Activated B cell treated with CpG ODN at 0.5 μM for 24 hours (primary cell): ENCODE measurements at regions of chr5 and their contacts with region 1.

Region 1: GRCh38 chr5:79133657-79134451 is 22.2 kb downstream of the BHMT start:
- DNase-seq: no peak
- ATAC-seq: peak; percentile 62
- H3K4me3 Mint-ChIP-seq: no peak overlapping the region
- H3K27ac Mint-ChIP-seq: no peak overlapping the region
- H3K4me1 Mint-ChIP-seq: peaks cover 8% of the 10 kb centered on the region
- H3K27me3 Mint-ChIP-seq: peaks cover 5% of the 10 kb centered on the region
- CTCF ChIP-seq: no peak

Region 2: DNA sequence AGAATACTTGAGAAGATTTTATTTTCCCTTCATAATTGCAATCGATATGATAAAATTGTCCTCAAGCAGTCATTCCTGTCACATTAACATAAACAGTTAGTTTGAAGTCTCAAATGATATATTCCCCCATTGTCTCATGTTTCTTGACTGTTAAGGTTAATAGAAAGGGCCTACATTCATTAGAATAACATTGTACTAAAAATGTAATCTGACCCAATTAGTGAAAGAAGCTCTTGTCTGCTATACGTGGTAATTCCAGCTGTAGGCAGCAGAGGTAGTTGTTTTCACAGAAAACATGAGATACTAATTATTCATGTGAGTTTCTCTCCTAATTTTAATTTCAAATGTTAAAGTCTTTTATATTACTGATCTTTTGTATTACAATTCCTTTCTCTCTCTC is 813.5 kb before region 1 on chr5:
- CTCF ChIA-PET with region 1: no interaction called
- POLR2A ChIA-PET with region 1: interaction called, 6 read pairs
- intact Hi-C with region 1: loop called (anchors 5 kb)
- DNase-seq: no peak
- ATAC-seq: no peak
- H3K4me3 Mint-ChIP-seq: no peak overlapping the region
- H3K27ac Mint-ChIP-seq: no peak overlapping the region
- H3K4me1 Mint-ChIP-seq: no peaks in the 10 kb centered on the region
- H3K27me3 Mint-ChIP-seq: no peaks in the 10 kb centered on the region
- CTCF ChIP-seq: no peak

Region 3: GRCh38 chr5:78537821-78538220 is 596.0 kb before region 1 on chr5:
- CTCF ChIA-PET with region 1: interaction called, 13 read pairs
- POLR2A ChIA-PET with region 1: no interaction called
- intact Hi-C with region 1: loop called (anchors 2 kb)
- DNase-seq: no peak
- ATAC-seq: peak; percentile 80
- H3K4me3 Mint-ChIP-seq: no peak overlapping the region
- H3K27ac Mint-ChIP-seq: no peak overlapping the region
- H3K4me1 Mint-ChIP-seq: peaks cover 10% of the 10 kb centered on the region
- H3K27me3 Mint-ChIP-seq: no peaks in the 10 kb centered on the region
- CTCF ChIP-seq: no peak

Region 4: GRCh38 chr5:78964887-78965286 is 169.0 kb before region 1 on chr5:
- CTCF ChIA-PET with region 1: interaction called, 7 read pairs
- POLR2A ChIA-PET with region 1: no interaction called
- intact Hi-C with region 1: loop called (anchors 1 kb)
- DNase-seq: no peak
- ATAC-seq: peak; percentile 62
- H3K4me3 Mint-ChIP-seq: no peak overlapping the region
- H3K27ac Mint-ChIP-seq: no peak overlapping the region
- H3K4me1 Mint-ChIP-seq: peaks cover 3% of the 10 kb centered on the region
- H3K27me3 Mint-ChIP-seq: no peaks in the 10 kb centered on the region
- CTCF ChIP-seq: no peak

Region 5: DNA sequence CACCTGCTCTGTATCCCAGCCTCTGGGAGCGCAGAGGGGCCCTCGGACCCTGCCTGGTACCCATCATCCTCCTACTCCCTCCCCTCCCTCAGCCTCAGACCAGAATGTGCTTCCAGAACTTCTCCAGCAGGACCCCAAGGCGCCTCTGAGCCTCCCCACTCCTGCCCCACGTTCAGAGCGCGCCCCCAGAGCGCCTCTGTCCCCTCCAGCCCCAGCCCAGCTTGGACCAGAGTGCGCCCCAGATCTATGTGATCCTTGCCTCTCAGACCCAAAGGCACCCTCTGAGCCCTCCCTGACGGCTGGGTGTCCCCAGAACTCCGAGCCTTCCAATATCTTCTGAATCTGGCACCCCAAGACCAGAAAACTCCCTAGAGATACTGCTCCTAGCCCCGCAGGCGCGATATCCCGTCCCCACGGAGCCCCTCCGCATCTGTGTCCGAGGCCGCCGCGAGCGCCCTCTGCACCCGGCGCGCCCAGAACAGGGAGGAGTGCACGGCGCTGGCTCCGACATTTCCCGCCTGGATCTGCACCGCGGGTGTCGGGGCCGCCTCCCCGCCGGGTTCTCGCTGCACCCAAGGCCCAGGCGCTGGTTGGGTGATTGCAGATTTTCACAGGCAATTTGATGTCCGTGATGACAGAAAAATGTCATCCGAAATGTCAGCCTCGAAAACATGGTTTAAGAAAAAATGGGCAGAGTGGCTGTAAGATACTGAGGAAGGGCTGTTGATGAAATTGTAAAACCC is 21.7 kb before region 1 on chr5:
- CTCF ChIA-PET with region 1: no interaction called
- POLR2A ChIA-PET with region 1: no interaction called
- intact Hi-C with region 1: no loop called
- DNase-seq: no peak
- ATAC-seq: no peak
- H3K4me3 Mint-ChIP-seq: no peak overlapping the region
- H3K27ac Mint-ChIP-seq: no peak overlapping the region
- H3K4me1 Mint-ChIP-seq: no peaks in the 10 kb centered on the region
- H3K27me3 Mint-ChIP-seq: peaks cover 50% of the 10 kb centered on the region
- CTCF ChIP-seq: no peak

Region 6: DNA sequence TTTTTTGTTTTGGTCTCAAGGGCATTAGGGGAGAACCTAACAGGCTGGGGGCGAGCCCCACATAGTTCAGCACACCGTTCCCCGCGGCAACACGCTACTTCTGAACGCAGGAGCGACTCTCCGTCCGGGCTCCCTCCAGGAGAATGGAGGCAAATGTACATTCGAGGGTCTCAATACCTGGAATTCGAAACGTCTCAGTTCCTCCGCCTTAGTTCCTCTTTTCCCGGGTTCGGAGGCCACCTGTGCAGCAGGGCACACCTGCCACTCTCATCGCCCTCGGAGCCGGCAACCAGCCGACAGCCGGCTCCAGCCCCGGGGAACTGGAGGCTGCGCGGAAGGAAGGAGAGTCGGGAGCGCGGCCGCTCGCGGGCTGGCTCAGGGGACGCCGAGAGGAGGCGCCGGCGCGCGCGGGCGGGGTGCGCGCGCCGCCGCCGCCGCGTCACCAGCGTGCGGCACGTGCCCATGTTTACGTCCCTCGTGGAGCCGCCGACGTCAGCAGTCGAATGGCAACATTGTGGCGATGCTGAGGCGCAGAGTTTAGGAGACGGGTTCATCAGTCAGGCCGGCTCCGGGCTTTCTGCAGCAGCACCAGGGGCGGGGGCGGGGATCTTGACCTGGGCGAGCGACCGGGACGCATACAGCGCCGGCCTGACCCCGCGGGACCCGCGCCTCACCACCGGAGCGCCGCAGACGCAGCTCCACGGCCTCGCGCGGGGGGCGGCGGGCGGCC is 101.9 kb after region 1 on chr5 and contains the start of gene JMY:
- CTCF ChIA-PET with region 1: no interaction called
- POLR2A ChIA-PET with region 1: no interaction called
- intact Hi-C with region 1: loop called (anchors 10 kb)
- DNase-seq: peak; percentile 68
- ATAC-seq: peak; percentile 79
- H3K4me3 Mint-ChIP-seq: peak within 1 kb of the TSS; percentile 91
- H3K27ac Mint-ChIP-seq: peak within 1 kb of the TSS; percentile 94
- H3K4me1 Mint-ChIP-seq: peaks cover 34% of the 10 kb centered on the region
- H3K27me3 Mint-ChIP-seq: no peaks in the 10 kb centered on the region
- CTCF ChIP-seq: no peak
- total RNA-seq, gene JMY: 6.4 and 6.9 TPM in 2 replicates

Region 7: DNA sequence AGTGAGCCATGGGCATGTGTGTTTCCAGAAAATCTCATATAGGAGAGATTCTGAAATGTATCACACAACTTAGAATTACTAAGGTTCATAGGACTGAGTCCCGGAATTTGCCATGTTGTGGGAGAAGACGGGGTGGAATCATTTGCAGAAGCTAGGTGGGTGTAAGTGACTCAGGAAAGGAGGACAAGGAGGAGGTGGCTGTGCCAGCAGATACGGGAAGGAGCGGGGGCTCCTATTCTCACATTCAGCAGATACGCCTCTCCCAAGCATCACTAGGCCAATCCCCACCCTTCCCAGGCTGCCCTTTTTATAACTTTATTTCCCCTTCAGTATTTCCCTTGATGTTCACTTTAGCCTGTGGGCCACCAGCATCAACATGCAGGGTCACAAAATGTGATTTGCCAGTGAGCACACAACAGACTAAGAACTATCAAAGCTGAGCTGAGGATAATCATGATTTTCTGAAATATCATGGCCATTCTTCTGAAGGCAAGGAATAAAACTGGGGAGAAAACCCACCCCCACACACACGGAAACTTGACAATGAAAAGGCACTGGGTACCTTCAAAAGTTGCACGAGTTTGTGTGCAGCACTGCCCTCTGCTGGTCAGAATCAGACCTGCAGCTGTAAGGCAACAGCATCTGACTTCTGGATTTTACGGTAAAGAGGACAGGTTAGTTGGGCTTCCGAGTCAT is 724.0 kb after region 1 on chr5:
- CTCF ChIA-PET with region 1: interaction called, 4 read pairs
- POLR2A ChIA-PET with region 1: no interaction called
- intact Hi-C with region 1: loop called (anchors 2 kb)
- DNase-seq: peak; percentile 53
- ATAC-seq: peak; percentile 47
- H3K4me3 Mint-ChIP-seq: no peak overlapping the region
- H3K27ac Mint-ChIP-seq: no peak overlapping the region
- H3K4me1 Mint-ChIP-seq: no peaks in the 10 kb centered on the region
- H3K27me3 Mint-ChIP-seq: peaks cover 10% of the 10 kb centered on the region
- CTCF ChIP-seq: no peak

Region 8: GRCh38 chr5:80008995-80009765 is 875.3 kb after region 1 on chr5:
- CTCF ChIA-PET with region 1: no interaction called
- POLR2A ChIA-PET with region 1: no interaction called
- intact Hi-C with region 1: no loop called
- DNase-seq: no peak
- ATAC-seq: no peak
- H3K4me3 Mint-ChIP-seq: no peak overlapping the region
- H3K27ac Mint-ChIP-seq: no peak overlapping the region
- H3K4me1 Mint-ChIP-seq: no peaks in the 10 kb centered on the region
- H3K27me3 Mint-ChIP-seq: no peaks in the 10 kb centered on the region
- CTCF ChIP-seq: no peak